OCI-LY7 (cell line): ENCODE measurements at regions of chr17 and their contacts with region 1.

Region 1: DNA sequence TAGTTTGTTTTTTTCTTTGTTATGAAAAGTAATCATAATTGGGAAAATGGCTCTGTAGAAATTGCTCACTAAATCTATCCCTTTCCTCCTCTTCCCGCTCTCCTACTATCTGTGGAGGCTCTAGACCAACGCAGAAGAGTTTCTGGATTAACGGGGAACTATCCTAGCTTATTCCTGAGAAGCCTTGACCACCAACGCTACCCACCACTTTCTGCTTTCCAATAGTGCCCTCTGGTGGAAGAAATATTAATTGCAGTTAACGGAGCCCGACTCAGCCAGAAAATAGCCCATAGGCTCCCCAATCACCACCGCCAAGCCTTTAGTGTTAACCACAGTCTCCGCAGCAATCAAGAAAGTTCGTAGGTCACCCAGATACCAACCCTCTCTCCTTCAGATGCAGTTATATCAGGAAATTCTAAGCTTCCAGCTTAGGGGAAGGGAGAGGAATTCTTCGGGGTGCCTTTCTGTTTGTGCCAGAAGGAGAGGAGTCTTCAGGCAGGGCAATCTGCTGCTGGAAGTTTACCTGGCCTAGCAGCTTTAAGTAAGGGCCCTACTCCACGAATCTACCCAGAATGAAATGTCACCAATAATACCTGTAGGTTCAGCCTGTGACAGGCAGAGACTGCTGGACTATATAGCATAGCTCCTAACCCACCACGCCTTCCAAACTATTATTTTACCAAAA is 23.0 kb upstream of the NSRP1 start:
- DNase-seq: peak; percentile 63
- H3K4me3 ChIP-seq: no peak overlapping the region
- H3K27ac ChIP-seq: no peak overlapping the region
- H3K4me1 ChIP-seq: peaks cover 6% of the 10 kb centered on the region
- CTCF ChIP-seq: peak; percentile 95

Region 2: GRCh38 chr17:29977836-29978235 is 115.8 kb before region 1 on chr17:
- CTCF ChIA-PET with region 1: no interaction called
- POLR2A ChIA-PET with region 1: no interaction called
- intact Hi-C with region 1: loop called (anchors 5 kb)
- DNase-seq: no peak
- H3K4me3 ChIP-seq: no peak overlapping the region
- H3K27ac ChIP-seq: no peak overlapping the region
- H3K4me1 ChIP-seq: no peaks in the 10 kb centered on the region
- CTCF ChIP-seq: no peak

Region 3: DNA sequence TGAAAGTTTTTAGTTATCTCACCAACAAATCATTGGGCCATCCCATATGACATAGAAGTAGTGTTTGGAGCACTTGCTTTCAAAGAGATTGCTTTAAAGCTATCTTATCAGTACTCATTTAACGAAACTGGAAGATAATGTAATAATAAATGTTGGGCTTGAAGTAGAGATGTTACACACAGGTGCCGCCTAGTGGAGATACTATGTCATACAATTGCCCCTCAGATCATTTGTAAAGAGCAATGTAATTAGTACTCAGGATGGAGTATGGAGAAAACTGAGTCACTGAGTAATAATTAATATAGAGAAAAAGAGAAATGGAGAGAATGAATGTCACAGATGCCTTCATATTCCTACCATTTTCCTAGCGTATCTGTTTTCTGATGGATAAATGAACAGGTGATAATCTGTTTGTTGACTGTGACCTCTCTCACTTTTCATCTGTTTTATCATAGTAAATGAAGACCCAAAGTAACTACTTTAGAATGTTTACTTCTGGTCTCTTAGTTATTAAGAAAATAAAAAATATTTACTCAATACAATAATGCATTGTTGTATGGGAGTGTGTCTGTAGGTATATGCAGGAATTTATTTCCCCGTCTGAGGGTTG is 71.8 kb before region 1 on chr17:
- CTCF ChIA-PET with region 1: no interaction called
- POLR2A ChIA-PET with region 1: interaction called, 3 read pairs
- intact Hi-C with region 1: loop called (anchors 1 kb)
- DNase-seq: peak; percentile 67
- H3K4me3 ChIP-seq: no peak overlapping the region
- H3K27ac ChIP-seq: no peak overlapping the region
- H3K4me1 ChIP-seq: no peaks in the 10 kb centered on the region
- CTCF ChIP-seq: peak; percentile 99

Region 4: GRCh38 chr17:30116661-30117551 is 23.3 kb after region 1 on chr17 and contains the start of gene NSRP1:
- CTCF ChIA-PET with region 1: no interaction called
- POLR2A ChIA-PET with region 1: no interaction called
- intact Hi-C with region 1: no loop called
- DNase-seq: peak; percentile 95
- H3K4me3 ChIP-seq: peak within 1 kb of the TSS; percentile 88
- H3K27ac ChIP-seq: peak within 1 kb of the TSS; percentile 75
- H3K4me1 ChIP-seq: peaks cover 26% of the 10 kb centered on the region
- CTCF ChIP-seq: no peak
- total RNA-seq, gene NSRP1: 18.6 and 26.1 TPM in 2 replicates

Region 5: DNA sequence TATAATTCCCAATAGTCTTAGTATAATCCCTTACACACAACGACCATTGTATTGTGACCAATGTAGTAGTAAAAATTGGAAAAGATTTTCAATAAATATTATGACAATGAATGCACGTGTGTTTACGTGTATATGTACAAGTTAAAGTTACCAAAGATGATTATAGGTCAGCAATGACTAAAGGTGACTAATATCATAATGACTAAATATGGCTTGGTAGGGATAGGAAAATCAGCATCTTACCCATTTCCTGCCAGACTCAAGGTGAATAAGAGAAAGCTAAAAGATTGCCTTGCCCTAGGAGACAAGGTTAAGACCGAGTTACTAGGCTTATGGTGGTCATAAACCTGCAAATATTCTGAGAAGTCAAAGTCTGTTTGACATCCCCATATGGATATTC is 319.5 kb after region 1 on chr17:
- CTCF ChIA-PET with region 1: no interaction called
- POLR2A ChIA-PET with region 1: no interaction called
- intact Hi-C with region 1: no loop called
- DNase-seq: no peak
- H3K4me3 ChIP-seq: no peak overlapping the region
- H3K27ac ChIP-seq: no peak overlapping the region
- H3K4me1 ChIP-seq: no peaks in the 10 kb centered on the region
- CTCF ChIP-seq: no peak